ENCODE measurements at regions of chrX and their contacts with region 1.

Region 1: DNA sequence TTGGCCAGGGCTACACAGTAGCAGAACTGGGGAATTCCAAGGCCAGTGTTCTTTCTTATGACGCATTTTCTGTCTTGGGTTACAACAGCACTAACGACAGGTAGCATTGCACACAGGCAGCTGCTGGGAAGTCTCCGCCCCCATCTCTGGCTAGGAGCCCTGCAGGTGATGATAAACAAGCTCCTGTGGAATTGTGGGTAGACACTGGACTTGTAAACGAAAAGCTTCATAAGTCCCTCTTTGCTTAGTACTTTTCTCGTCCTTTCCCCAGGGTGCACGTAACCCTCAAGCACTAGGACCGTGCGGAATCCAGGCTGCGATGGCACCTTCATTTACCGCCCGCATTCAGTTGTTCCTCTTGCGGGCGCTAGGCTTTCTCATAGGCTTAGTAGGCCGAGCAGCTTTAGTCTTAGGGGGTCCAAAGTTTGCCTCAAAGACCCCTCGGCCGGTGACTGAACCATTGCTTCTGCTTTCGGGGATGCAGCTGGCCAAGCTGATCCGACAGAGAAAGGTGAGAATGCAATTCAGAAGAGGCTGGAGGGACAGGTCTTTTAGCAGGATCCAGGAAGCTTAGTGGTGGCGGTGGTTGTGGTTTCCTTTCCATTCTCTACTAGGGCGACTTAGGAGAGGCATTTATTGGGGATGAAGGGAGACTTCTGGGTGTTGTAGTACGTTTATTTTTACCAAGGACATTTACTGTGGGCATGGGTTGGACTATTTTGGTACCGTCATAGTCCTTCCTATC is at the start of gene FAAH2:
- DNase-seq: peak; percentile 90
- ATAC-seq: peak; percentile 92
- H3K4me3 ChIP-seq: peak within 1 kb of the TSS; percentile 49 to 68
- H3K27ac ChIP-seq: peak within 1 kb of the TSS; percentile 80
- H3K4me1 ChIP-seq: peaks cover 0 to 6% of the 10 kb centered on the region in 2 experiments; a peak in 3 of 4 replicates
- H3K27me3 ChIP-seq: no peaks in the 10 kb centered on the region
- CTCF ChIP-seq: 0 out of 6 replicates have a peak, but pooled peaks of 1 of the 3 experiments have one; percentile 4
- POLR2A ChIP-seq: peak; percentile 31
- RAD21 ChIP-seq: no peak
- total RNA-seq, gene FAAH2: 6.1 TPM

Region 2: DNA sequence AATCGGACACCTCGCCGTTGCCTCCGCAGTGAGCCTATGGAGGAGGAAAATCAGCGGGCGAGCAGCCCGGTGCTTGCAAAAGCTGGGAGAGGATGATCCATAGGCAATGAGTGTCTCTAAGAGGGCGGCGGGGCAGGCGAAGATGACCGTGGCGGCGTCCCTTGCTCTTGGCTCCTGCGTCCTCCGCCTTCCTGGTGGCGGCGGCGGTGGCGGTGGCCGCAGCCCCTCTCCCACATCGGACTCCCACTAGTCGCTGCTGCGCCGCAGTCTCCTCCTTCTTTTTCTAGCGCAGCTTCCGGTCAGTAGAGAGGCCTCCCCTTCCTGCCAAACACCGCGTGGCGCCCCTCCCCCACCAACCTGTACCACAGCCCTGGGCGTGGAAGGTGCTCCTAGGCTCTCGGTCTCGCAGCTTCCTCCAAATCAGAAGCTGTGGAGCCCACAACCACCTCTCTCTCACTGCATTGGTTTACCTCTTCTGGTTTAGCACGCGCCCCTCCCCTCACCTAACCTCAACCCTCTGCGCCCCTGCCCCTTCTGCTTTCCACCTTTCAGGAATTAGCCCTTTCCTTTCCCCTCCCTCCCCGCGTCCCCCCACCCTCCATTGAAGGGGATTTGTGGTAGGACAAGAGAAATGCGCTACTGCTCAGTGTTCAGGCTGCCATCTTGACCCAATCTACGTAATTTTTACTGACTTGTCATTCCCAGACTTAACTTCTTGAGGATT is 291.2 kb before region 1 on chrX and contains the start of gene SPIN3:
- CTCF ChIA-PET with region 1: no interaction called
- POLR2A ChIA-PET with region 1: no interaction called
- RAD21 ChIA-PET with region 1: no interaction called
- intact Hi-C with region 1: loop called (anchors 10 kb)
- DNase-seq: peak; percentile 73
- ATAC-seq: peak; percentile 99
- H3K4me3 ChIP-seq: peak within 1 kb of the TSS; percentile 59 to 80
- H3K27ac ChIP-seq: peak within 1 kb of the TSS; percentile 67
- H3K4me1 ChIP-seq: peaks cover 0 to 16% of the 10 kb centered on the region in 2 experiments; a peak in 3 of 4 replicates
- H3K27me3 ChIP-seq: no peaks in the 10 kb centered on the region
- CTCF ChIP-seq: no peak
- POLR2A ChIP-seq: peak; percentile 61
- RAD21 ChIP-seq: no peak
- total RNA-seq, gene SPIN3: 13.8 TPM

Region 3: DNA sequence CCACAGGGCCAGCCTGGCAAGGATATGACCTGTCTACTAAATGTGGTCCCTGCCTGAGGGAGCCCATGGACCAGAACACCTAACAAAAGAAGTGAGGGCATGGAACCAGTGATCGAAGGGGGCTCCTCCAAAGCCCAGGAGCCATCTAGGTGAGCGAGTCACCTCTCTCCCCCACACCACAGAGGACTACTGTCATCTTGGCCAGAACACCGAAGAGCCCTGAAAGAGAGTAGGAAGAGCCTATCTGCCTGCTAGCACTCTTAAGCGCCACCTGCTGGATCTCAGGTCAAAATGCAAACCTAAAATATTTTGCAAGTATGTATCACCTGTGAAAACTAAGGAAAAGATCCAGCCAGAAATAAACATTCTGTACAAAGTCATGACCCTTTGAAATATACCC is 167.2 kb after region 1 on chrX:
- CTCF ChIA-PET with region 1: no interaction called
- POLR2A ChIA-PET with region 1: no interaction called
- RAD21 ChIA-PET with region 1: no interaction called
- intact Hi-C with region 1: loop called (anchors 2 kb)
- DNase-seq: no peak
- ATAC-seq: peak; percentile 76
- H3K4me3 ChIP-seq: no peak overlapping the region
- H3K27ac ChIP-seq: no peak overlapping the region
- H3K4me1 ChIP-seq: no peaks in the 10 kb centered on the region
- H3K27me3 ChIP-seq: no peaks in the 10 kb centered on the region
- CTCF ChIP-seq: peak; percentile 36 to 61 (median 56); a peak in 5 of 6 replicates
- POLR2A ChIP-seq: no peak
- RAD21 ChIP-seq: peak; percentile 57

Region 4: GRCh38 chrX:57573754-57574153 is 287.1 kb after region 1 on chrX:
- CTCF ChIA-PET with region 1: interaction called, 3 read pairs
- POLR2A ChIA-PET with region 1: no interaction called
- RAD21 ChIA-PET with region 1: no interaction called
- intact Hi-C with region 1: loop called (anchors 10 kb)
- DNase-seq: no peak
- ATAC-seq: peak; percentile 70
- H3K4me3 ChIP-seq: no peak overlapping the region
- H3K27ac ChIP-seq: no peak overlapping the region
- H3K4me1 ChIP-seq: no peaks in the 10 kb centered on the region
- H3K27me3 ChIP-seq: no peaks in the 10 kb centered on the region
- CTCF ChIP-seq: peak; percentile 21 to 50 (median 42); a peak in 3 of 6 replicates
- POLR2A ChIP-seq: no peak
- RAD21 ChIP-seq: peak; percentile 47

Measured in HCT116 (cell line).